ENCODE measurements at regions of chr6 and their contacts with region 1.

Region 1: GRCh38 chr6:118651282-118652050 is at the start of gene CEP85L:
- DNase-seq: peak; percentile 80 to 95 (median 91)
- ATAC-seq: peak; percentile 91
- H3K4me3 ChIP-seq: peak within 1 kb of the TSS; percentile 72 to 86
- H3K4me3 Mint-ChIP-seq: peak within 1 kb of the TSS; percentile 95
- H3K27ac ChIP-seq: peak within 1 kb of the TSS; percentile 79 to 81
- H3K27ac Mint-ChIP-seq: peak within 1 kb of the TSS; percentile 95
- H3K4me1 ChIP-seq: peaks cover 43% of the 10 kb centered on the region
- H3K4me1 Mint-ChIP-seq: peaks cover 51% of the 10 kb centered on the region
- H3K27me3 ChIP-seq: no peaks in the 10 kb centered on the region
- H3K27me3 Mint-ChIP-seq: no peaks in the 10 kb centered on the region
- CTCF ChIP-seq: no peak
- total RNA-seq, gene CEP85L: 86.2 to 89.0 TPM

Region 2: DNA sequence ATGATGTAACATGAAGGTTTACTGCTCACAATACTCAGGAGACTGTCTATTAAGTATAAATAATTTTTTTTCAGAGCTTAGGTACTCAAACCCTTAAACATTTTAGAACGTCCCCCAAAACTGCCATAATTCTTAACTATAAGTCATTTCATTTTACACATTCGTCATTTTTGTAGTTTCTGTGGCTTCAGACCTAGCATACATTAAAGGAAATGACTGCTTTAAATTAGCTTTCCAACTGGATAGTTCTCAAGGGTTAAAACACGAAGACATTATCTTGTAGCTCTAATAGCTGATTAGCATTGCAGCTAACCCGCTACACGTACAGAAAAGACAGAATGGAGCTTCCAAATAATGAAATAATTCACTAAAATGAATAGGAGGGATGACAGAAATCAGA is 128.2 kb before region 1 on chr6:
- CTCF ChIA-PET with region 1: no interaction called
- POLR2A ChIA-PET with region 1: no interaction called
- intact Hi-C with region 1: no loop called
- DNase-seq: no peak
- ATAC-seq: no peak
- H3K4me3 ChIP-seq: no peak overlapping the region
- H3K4me3 Mint-ChIP-seq: no peak overlapping the region
- H3K27ac ChIP-seq: no peak overlapping the region
- H3K27ac Mint-ChIP-seq: no peak overlapping the region
- H3K4me1 ChIP-seq: no peaks in the 10 kb centered on the region
- H3K4me1 Mint-ChIP-seq: peaks cover 37% of the 10 kb centered on the region
- H3K27me3 ChIP-seq: no peaks in the 10 kb centered on the region
- H3K27me3 Mint-ChIP-seq: no peaks in the 10 kb centered on the region
- CTCF ChIP-seq: no peak

Region 3: GRCh38 chr6:118725944-118726343 is 74.5 kb after region 1 on chr6:
- CTCF ChIA-PET with region 1: interaction called, 5 read pairs
- POLR2A ChIA-PET with region 1: interaction called, 4 read pairs
- intact Hi-C with region 1: loop called (anchors 1 to 5 kb)
- DNase-seq: peak in 8 of 9 experiments; percentile 52 to 88 (median 74)
- ATAC-seq: peak; percentile 92
- H3K4me3 ChIP-seq: no peak overlapping the region
- H3K4me3 Mint-ChIP-seq: peak overlapping the region; percentile 38
- H3K27ac ChIP-seq: peak overlapping the region in 1 of 2 experiments; percentile 36
- H3K27ac Mint-ChIP-seq: peak overlapping the region; percentile 82
- H3K4me1 ChIP-seq: peaks cover 49% of the 10 kb centered on the region
- H3K4me1 Mint-ChIP-seq: peaks cover 67% of the 10 kb centered on the region
- H3K27me3 ChIP-seq: no peaks in the 10 kb centered on the region
- H3K27me3 Mint-ChIP-seq: no peaks in the 10 kb centered on the region
- CTCF ChIP-seq: peak; percentile 33

Region 4: GRCh38 chr6:119078376-119079282 is 427.2 kb after region 1 on chr6 and contains the start of gene FAM184A:
- CTCF ChIA-PET with region 1: no interaction called
- POLR2A ChIA-PET with region 1: no interaction called
- intact Hi-C with region 1: loop called (anchors 10 kb)
- DNase-seq: peak; percentile 50 to 86 (median 71)
- ATAC-seq: peak; percentile 74
- H3K4me3 ChIP-seq: peak within 1 kb of the TSS; percentile 58 to 66
- H3K4me3 Mint-ChIP-seq: peak within 1 kb of the TSS; percentile 94
- H3K27ac ChIP-seq: peak within 1 kb of the TSS; percentile 34 to 46
- H3K27ac Mint-ChIP-seq: peak within 1 kb of the TSS; percentile 91
- H3K4me1 ChIP-seq: peaks cover 25% of the 10 kb centered on the region
- H3K4me1 Mint-ChIP-seq: peaks cover 32% of the 10 kb centered on the region
- H3K27me3 ChIP-seq: no peaks in the 10 kb centered on the region
- H3K27me3 Mint-ChIP-seq: no peaks in the 10 kb centered on the region
- CTCF ChIP-seq: no peak
- total RNA-seq, gene FAM184A: 0.50 to 0.79 TPM